Heart left ventricle (tissue), 16 donors: ENCODE measurements at regions of chr9 and their contacts with region 1.

Region 1: GRCh38 chr9:68637020-68637419 is 68.0 kb upstream of the PIP5K1B start:
- DNase-seq: no peak
- ATAC-seq: no peak
- H3K4me3 ChIP-seq: no peak overlapping the region
- H3K27ac ChIP-seq: no peak overlapping the region
- H3K4me1 ChIP-seq: peaks cover 0 to 2% (median 0%) of the 10 kb centered on the region in 12 donors
- H3K27me3 ChIP-seq: no peaks in the 10 kb centered on the region
- CTCF ChIP-seq: no peak
- POLR2A ChIP-seq: no peak

Region 2: DNA sequence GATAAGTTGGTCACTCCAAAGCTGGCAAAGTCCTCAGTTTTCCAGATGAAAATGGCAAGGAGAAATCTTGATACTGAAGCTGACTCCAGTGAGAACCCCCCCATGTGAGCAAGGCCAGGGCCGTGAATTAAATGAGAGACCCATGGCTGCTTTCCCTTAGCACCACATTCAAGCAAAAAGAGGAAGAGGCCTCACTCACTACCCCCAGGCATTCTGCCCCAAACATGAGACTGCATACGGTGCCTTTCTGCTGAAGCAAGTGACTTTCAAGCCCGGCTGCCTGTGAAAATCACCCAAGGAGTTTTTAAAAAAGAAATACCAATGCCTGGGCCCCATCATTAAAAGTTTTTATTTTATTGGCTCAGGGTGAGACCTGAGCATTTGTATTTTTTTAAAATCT is 163.2 kb before region 1 on chr9:
- intact Hi-C with region 1: no loop called
- DNase-seq: no peak
- ATAC-seq: no peak
- H3K4me3 ChIP-seq: no peak overlapping the region
- H3K27ac ChIP-seq: peak overlapping the region in 1 of 12 donors; percentile 13
- H3K4me1 ChIP-seq: peaks cover 0 to 53% (median 32%) of the 10 kb centered on the region in 12 donors
- H3K27me3 ChIP-seq: no peaks in the 10 kb centered on the region
- CTCF ChIP-seq: no peak
- POLR2A ChIP-seq: no peak

Region 3: GRCh38 chr9:68672215-68672614 is 35.2 kb after region 1 on chr9:
- intact Hi-C with region 1: no loop called
- DNase-seq: no peak
- ATAC-seq: no peak
- H3K4me3 ChIP-seq: no peak overlapping the region
- H3K27ac ChIP-seq: no peak overlapping the region
- H3K4me1 ChIP-seq: peaks cover 0 to 8% (median 0%) of the 10 kb centered on the region in 12 donors
- H3K27me3 ChIP-seq: no peaks in the 10 kb centered on the region
- CTCF ChIP-seq: no peak
- POLR2A ChIP-seq: no peak

Region 4: DNA sequence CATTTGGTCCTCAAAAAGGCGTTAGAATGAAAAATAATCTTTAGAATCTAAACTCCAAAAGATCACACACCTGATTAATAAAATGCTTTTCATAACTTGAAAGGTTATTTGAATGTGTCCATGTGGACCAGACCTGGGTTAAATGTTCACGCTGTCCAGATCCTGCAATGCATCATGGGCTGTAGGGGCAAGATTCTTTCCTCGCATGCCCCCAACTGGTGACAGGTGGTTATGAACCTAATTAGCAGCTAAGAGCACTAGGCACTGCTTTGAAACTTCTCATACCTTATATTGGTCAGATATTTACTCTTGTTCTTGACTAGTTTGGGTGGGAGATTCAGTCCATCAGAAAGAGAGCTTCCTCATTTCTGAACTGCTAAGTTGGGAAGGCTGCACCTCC is 48.8 kb after region 1 on chr9:
- intact Hi-C with region 1: loop called in 2 of 10 experiments (anchors 10 kb)
- DNase-seq: no peak
- ATAC-seq: no peak
- H3K4me3 ChIP-seq: no peak overlapping the region
- H3K27ac ChIP-seq: no peak overlapping the region
- H3K4me1 ChIP-seq: peaks cover 0 to 18% (median 4%) of the 10 kb centered on the region in 12 donors
- H3K27me3 ChIP-seq: peaks cover 0 to 5% (median 0%) of the 10 kb centered on the region in 9 donors
- CTCF ChIP-seq: peak in 7 of 12 donors; percentile 9 to 31 (median 20)
- POLR2A ChIP-seq: no peak